ENCODE measurements at regions of chr14 and their contacts with region 1.

Region 1: DNA sequence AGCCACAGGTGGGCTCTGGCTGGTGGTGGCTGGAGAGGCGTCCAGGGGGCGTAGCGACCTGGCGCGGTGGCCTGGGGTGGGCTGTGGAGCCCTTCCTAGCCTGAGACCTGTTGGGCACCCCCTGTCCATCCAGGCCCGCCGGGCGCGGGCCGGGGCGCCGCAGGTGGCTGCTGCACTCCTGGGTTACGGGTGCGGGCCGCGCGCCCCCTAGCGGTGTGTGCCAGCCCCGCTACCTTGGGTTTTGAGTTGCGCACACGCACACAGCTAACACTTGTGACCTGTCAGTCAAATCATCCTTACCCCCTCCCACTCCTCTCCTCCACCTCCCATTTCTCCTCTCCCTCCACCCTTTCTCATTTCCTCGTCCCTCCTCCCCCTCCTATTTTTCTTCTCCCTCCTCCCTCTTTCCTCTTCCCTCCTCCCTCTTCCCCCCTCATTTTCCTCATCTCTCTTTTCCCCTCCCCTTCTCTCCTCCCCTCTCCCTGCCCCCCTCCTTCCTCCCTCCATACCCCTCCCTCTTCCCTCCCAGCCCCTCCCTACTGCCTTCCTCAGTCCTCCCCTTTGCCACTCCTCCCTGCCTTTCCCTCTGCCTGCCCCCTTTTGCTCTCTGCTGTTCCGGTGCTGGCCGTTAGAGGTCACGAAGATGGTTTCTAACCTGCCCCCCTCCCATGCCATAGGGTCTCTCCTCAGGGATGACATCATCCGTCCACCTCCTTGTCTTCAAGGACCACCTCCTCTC is 2.3 kb downstream of the MEG3 start:
- DNase-seq: peak in 7 of 10 donors; percentile 37 to 92 (median 46)

Region 2: DNA sequence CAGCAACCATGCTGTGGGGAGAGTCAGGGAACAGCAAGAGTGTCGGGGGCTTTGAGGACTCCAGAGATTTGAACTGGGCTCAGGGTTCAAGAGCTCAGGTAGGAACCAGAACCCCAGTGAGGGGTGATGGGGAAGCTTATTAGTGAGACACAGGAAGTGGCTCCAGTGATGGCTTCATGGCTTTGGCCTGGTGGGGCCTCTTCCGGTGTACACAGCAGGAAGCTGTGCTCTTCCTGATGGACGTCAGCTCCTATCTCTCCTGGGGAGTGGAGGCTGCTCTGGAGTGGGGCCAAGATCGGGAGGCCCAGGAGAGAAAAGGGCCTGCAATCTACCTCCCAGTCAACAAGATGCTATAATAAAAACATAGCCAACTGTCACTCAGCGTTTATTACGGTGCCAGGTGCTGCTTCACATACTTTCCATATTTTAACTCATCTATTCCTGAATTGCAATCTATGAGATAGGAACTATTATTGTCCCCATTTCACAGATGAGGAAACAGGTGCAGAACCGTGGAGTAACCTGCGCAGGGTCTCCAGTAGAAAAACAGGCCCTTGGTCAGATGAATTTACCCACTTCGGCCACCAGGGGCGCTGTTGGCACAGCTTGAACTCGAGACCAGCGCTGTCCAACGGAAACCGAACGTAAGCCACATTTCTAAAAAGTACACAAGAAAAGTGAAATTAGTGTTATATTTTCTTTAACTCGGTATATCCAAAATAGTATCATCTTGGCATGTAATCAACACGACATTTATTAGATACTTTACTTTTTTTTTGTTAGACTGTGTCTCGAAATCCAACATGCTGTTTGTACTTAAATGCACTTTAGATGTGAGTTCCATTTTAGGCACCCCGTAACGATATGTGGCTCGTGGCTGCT is 165.1 kb before region 1 on chr14:
- intact Hi-C with region 1: loop called (anchors 10 kb)
- DNase-seq: peak; percentile 50 to 94 (median 72)

Region 3: DNA sequence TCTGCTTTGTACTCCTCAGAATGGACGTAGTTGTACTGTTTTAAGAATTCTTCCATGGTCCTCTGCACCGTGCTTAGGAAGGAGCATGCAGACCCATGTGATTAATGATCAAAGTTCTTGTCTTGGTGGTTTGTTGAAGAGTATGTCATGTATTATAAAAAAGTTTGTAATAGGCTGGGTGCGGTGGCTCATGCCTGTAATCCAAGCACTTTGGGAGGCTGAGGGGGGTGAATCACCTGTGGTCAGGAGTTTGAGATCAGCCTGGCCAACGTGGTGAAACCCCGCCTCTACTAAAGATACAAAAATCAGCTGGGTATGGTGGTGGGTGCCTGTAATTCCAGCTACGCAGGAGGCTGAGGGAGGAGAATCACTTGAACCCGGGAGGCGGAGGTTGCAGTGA is 137.1 kb after region 1 on chr14:
- intact Hi-C with region 1: no loop called
- DNase-seq: no peak